ENCODE measurements at regions of chr3 and their contacts with region 1.

Region 1: DNA sequence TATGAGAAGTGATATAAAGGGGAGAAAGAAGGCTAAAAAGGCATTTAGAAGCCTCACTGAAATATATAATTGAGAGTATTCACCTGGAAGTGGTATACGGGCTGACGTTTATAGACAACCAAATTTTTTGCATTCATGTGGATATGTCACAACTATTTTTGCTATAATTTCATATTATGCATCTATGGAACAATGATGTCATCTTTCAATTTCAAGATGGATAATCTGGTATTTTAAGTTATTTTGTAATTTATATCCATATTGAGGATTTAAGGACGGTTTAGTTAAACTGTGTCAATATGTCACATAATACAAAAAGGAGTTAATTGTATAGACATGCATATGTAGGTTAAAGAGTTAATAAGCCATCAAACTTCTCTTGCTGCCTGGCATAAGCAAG is 1337.1 kb downstream of the ROBO2 start:
- DNase-seq: no peak
- ATAC-seq: no peak
- H3K4me3 ChIP-seq: no peak overlapping the region
- H3K27ac ChIP-seq: no peak overlapping the region
- H3K4me1 ChIP-seq: no peaks in the 10 kb centered on the region
- CTCF ChIP-seq: no peak
- EP300 ChIP-seq: no peak
- POLR2A ChIP-seq: no peak
- RAD21 ChIP-seq: no peak

Region 2: GRCh38 chr3:77718311-77718710 is 658.7 kb before region 1 on chr3:
- CTCF ChIA-PET with region 1: no interaction called
- POLR2A ChIA-PET with region 1: interaction called, 11 read pairs
- DNase-seq: no peak
- ATAC-seq: no peak
- H3K4me3 ChIP-seq: no peak overlapping the region
- H3K27ac ChIP-seq: no peak overlapping the region
- H3K4me1 ChIP-seq: no peaks in the 10 kb centered on the region
- CTCF ChIP-seq: no peak
- EP300 ChIP-seq: no peak
- POLR2A ChIP-seq: no peak
- RAD21 ChIP-seq: no peak

Region 3: GRCh38 chr3:78351334-78351733 is 25.6 kb before region 1 on chr3:
- CTCF ChIA-PET with region 1: no interaction called
- POLR2A ChIA-PET with region 1: no interaction called
- DNase-seq: no peak
- ATAC-seq: no peak
- H3K4me3 ChIP-seq: no peak overlapping the region
- H3K27ac ChIP-seq: no peak overlapping the region
- H3K4me1 ChIP-seq: no peaks in the 10 kb centered on the region
- CTCF ChIP-seq: no peak
- EP300 ChIP-seq: no peak
- POLR2A ChIP-seq: no peak
- RAD21 ChIP-seq: no peak